Activated naive CD4-positive, alpha-beta T cell treated with anti-CD3 and anti-CD28 coated beads for 36 hours (primary cell): ENCODE measurements at regions of chr7 and their contacts with region 1.

Region 1: DNA sequence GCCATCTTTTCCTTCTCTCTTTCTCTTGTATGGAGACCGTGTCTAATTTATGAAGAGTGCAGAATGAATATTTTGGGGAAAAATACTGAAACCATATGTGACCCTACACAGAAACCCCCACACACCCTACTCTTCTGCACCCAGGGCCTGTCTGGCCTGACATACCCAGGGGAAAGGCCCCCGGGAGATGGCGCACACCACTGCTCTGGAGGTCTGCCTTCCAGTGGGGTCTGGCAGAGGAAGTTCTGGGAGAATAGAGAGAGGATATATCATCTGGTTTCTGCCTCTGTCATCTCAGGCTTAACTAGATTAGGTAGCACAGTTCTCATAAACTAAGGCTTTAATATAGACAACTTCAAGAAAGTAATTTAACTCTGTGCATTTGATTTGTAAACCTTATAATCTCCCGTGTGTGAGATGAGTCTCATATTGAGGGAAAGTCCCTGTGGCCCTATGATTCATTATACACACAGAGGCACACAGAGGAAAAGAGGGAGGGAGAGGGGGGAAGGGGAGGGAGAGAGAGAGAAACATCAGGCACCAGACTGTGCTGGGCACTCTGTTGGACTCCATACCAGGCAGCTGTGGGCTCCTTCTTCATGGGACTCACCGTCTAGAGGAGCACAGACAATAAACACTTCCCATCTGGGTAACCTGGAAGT is 123.3 kb downstream of the AOAH start:
- DNase-seq: peak; percentile 60
- H3K4me3 Mint-ChIP-seq: no peak overlapping the region
- H3K27ac Mint-ChIP-seq: no peak overlapping the region
- H3K4me1 Mint-ChIP-seq: peaks cover 73% of the 10 kb centered on the region
- H3K27me3 Mint-ChIP-seq: no peaks in the 10 kb centered on the region

Region 2: DNA sequence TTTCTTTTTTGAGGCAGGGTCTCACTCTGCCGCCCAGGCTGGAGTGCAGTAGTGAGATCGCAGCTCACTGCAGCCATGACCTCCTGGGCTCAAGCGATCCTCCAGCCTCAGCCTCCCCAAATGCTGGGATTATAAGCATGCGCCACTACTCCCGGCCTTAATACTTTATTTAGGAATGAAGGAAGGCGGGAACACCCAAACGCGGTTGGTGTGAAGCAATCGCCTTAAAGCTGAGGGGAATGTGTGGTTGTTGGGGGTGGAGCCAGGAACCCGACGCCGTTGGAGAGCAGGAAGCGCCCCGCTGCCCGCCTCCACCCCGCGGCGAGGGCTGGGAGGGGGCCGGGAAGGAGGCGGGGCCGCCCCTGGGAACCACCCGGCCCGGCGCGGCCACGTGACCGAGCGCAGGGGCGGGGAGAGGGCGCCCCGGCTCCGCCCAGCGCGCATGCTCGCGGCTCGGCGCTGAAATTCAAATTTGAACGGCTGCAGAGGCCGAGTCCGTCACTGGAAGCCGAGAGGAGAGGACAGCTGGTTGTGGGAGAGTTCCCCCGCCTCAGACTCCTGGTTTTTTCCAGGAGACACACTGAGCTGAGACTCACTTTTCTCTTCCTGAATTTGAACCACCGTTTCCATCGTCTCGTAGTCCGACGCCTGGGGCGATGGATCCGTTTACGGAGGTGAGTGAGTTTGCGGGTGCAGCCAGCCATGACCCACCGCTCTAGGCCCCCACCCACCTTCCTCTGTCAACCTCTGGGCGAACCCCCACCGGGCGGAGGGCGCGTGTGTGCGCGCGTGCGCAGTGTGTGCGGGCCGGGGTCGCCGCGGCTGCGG is 211.4 kb before region 1 on chr7 and contains the start of gene ANLN:
- CTCF ChIA-PET with region 1: no interaction called
- intact Hi-C with region 1: loop called (anchors 2 kb)
- DNase-seq: peak; percentile 85
- H3K4me3 Mint-ChIP-seq: peak within 1 kb of the TSS; percentile 87
- H3K27ac Mint-ChIP-seq: peak within 1 kb of the TSS; percentile 86
- H3K4me1 Mint-ChIP-seq: peaks cover 21% of the 10 kb centered on the region
- H3K27me3 Mint-ChIP-seq: peaks cover 10% of the 10 kb centered on the region
- total RNA-seq, gene ANLN: 62.4 to 64.8 TPM

Region 3: GRCh38 chr7:36547416-36547815 is 53.6 kb before region 1 on chr7:
- CTCF ChIA-PET with region 1: no interaction called
- intact Hi-C with region 1: no loop called
- DNase-seq: no peak
- H3K4me3 Mint-ChIP-seq: no peak overlapping the region
- H3K27ac Mint-ChIP-seq: no peak overlapping the region
- H3K4me1 Mint-ChIP-seq: no peaks in the 10 kb centered on the region
- H3K27me3 Mint-ChIP-seq: no peaks in the 10 kb centered on the region

Region 4: GRCh38 chr7:36563706-36564327 is 37.2 kb before region 1 on chr7:
- CTCF ChIA-PET with region 1: no interaction called
- intact Hi-C with region 1: no loop called
- DNase-seq: no peak
- H3K4me3 Mint-ChIP-seq: no peak overlapping the region
- H3K27ac Mint-ChIP-seq: no peak overlapping the region
- H3K4me1 Mint-ChIP-seq: peaks cover 2% of the 10 kb centered on the region
- H3K27me3 Mint-ChIP-seq: no peaks in the 10 kb centered on the region

Region 5: GRCh38 chr7:36583318-36583717 is 17.7 kb before region 1 on chr7:
- CTCF ChIA-PET with region 1: interaction called, 3 read pairs
- intact Hi-C with region 1: loop called (anchors 1 kb)
- DNase-seq: no peak
- H3K4me3 Mint-ChIP-seq: no peak overlapping the region
- H3K27ac Mint-ChIP-seq: no peak overlapping the region
- H3K4me1 Mint-ChIP-seq: peaks cover 8% of the 10 kb centered on the region
- H3K27me3 Mint-ChIP-seq: no peaks in the 10 kb centered on the region

Region 6: GRCh38 chr7:36639826-36640225 is 38.8 kb after region 1 on chr7:
- CTCF ChIA-PET with region 1: no interaction called
- intact Hi-C with region 1: loop called (anchors 2 kb)
- DNase-seq: peak; percentile 54
- H3K4me3 Mint-ChIP-seq: no peak overlapping the region
- H3K27ac Mint-ChIP-seq: no peak overlapping the region
- H3K4me1 Mint-ChIP-seq: peaks cover 61% of the 10 kb centered on the region
- H3K27me3 Mint-ChIP-seq: no peaks in the 10 kb centered on the region

Region 7: DNA sequence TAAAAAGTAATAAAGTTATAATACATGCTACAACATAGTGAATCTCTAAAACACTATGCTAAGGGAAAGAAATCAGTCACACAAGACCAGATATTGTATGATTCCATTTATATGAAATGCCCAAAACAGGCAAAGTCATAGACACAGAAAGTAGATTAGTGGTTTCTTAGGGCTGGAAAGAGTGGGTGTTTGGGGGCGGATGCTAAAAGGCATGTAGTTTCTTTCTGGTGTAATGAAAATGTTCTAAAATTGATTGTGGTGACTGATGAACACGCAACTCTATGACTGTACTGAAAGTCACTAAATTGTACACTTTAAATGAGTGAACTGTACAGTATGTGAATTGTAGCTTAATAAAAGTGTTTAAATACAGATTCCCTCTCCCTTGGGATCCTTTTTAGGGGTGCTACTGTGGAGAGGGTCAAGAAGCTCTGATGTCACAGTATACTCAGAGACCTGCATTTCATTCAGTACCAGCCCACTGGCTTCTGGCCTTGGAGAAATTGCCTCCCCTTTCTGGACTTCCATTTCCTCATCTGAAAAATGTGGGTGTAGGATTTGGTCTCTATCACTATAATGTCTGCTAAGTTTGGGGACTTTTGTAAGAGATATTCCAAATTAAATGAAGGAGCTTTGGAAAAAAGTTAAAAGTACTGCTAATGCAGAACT is 76.9 kb after region 1 on chr7:
- CTCF ChIA-PET with region 1: interaction called, 3 read pairs
- intact Hi-C with region 1: loop called (anchors 1 kb)
- DNase-seq: peak; percentile 79
- H3K4me3 Mint-ChIP-seq: peak overlapping the region; percentile 31
- H3K27ac Mint-ChIP-seq: peak overlapping the region; percentile 57
- H3K4me1 Mint-ChIP-seq: peaks cover 38% of the 10 kb centered on the region
- H3K27me3 Mint-ChIP-seq: peaks cover 2% of the 10 kb centered on the region

Region 8: DNA sequence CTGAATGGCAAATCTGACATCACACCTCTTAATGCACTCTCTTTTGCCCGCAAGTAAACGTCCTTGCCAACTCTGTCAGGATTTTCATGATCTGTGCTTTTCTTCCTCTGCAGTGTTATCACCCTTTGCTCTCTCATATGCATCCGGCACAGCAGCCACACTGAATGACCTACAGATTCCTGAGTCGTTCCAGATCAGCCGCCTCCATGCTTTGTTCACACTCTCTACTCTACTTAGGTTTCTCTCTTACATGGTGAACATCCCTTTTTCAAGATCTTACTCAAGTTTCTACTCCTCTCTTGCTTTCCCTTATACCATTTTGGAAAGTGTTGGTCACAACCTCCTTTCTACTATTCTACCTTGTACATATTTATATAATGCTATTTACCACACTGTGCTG is 251.0 kb after region 1 on chr7:
- CTCF ChIA-PET with region 1: no interaction called
- intact Hi-C with region 1: loop called (anchors 5 kb)
- DNase-seq: peak; percentile 18
- H3K4me3 Mint-ChIP-seq: no peak overlapping the region
- H3K27ac Mint-ChIP-seq: peak overlapping the region; percentile 54
- H3K4me1 Mint-ChIP-seq: peaks cover 17% of the 10 kb centered on the region
- H3K27me3 Mint-ChIP-seq: no peaks in the 10 kb centered on the region

Region 9: DNA sequence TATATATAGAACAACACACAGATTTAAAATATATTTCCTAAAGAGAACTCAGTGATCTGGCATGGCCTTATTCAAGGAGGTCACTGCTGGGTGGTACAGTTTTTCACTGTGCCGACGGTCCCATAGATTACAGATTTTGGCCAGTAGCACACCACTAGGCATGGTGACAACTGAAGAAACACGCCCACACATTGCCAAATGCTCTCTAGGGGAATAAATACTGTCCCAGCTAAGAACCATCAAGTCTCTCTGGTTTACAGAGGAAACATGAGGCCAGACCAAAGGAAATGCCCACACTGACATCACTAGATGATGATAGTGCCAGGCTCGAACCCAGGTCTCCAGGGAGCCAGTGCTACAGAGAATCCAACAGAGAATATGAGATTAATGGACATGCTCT is 530.9 kb after region 1 on chr7:
- CTCF ChIA-PET with region 1: no interaction called
- intact Hi-C with region 1: no loop called
- DNase-seq: no peak
- H3K4me3 Mint-ChIP-seq: no peak overlapping the region
- H3K27ac Mint-ChIP-seq: no peak overlapping the region
- H3K4me1 Mint-ChIP-seq: peaks cover 7% of the 10 kb centered on the region
- H3K27me3 Mint-ChIP-seq: no peaks in the 10 kb centered on the region

Region 10: DNA sequence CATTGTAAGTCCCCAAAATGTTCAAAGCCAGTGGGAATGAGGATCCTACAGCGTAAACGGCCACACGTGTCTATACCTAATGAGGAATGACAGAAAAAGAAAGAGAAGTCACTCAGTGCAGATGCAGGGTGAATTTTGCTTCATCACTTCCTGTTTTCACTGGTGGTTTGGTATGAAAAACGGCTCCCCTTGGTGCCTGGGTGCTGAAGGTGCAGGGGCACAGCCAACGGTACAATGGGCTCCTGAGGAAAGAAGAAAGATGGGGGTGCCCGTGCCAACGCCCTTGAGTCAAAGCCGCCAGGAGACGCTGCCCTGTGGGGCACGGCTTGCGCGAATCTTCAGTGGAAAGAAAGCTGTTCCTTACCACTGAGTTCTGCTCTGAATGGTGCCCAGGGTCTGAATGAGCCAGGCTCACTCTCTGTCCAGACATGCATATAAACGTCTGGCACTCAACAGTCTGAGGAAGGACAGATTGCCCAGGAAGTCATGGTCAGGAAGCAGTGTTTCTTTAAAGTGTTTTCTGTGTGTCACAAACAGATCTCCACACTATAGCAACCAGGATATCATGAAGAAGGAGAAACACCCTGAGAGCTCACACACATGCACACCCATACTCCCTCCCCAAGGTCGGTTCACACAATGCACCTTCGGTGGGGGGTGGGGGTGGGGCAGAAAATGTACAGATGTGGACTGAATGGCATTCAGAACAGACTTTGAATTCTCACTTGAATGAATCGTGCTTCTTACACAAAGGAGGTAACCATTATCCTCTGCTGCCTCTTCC is 741.9 kb after region 1 on chr7:
- CTCF ChIA-PET with region 1: no interaction called
- intact Hi-C with region 1: loop called (anchors 10 kb)
- DNase-seq: peak; percentile 86
- H3K4me3 Mint-ChIP-seq: peak overlapping the region; percentile 89
- H3K27ac Mint-ChIP-seq: peak overlapping the region; percentile 97
- H3K4me1 Mint-ChIP-seq: peaks cover 81% of the 10 kb centered on the region
- H3K27me3 Mint-ChIP-seq: no peaks in the 10 kb centered on the region